ENCODE measurements at regions of chr12 and their contacts with region 1.

Region 1: DNA sequence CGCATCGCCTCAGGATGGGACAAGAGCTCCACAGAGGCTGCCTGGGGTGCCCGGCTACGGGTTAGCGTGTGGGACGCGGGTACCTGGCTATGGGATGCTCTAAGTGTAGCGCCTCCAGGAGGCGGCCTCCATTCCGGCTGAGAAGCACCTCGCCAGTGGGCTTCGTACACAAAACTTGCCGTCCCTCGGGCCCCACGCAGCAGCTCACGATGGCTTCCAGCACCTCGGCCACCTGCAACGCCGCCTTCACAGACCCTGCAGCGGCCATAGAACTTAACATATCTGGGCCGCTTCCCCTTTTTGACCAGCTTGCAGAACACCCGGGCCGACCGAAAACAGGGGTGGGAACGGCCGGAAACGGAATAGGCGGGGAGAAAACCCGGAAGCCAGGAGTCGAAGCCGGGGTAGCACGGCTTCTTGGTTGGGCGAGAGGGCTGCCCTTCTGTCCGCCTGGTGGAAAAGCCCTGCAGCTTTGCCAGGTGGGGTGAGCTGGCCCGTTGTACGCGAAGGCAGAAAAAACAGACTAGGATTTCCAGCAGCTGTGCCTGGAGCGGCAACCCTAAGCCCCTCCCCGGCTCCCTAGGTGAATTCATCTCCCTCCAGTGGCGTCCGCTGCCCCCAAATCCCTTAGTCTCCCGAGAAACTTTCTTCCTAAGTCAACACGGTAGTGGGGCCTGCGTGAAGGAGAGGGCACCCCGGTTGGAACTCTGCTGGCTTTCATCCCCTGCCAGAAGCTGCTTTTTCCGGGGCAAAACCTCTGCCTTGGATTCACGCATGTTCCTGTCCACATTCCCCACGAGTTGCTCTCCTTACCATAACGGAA is at the start of gene BBS10:
- DNase-seq: peak; percentile 83 to 91
- ATAC-seq: peak; percentile 91 to 96
- H3K4me3 ChIP-seq: peak within 1 kb of the TSS; percentile 68 to 91 (median 82)
- H3K27ac ChIP-seq: peak within 1 kb of the TSS; percentile 83 to 92 (median 88)
- H3K4me1 ChIP-seq: peaks cover 30 to 39% of the 10 kb centered on the region in 2 donors
- H3K27me3 ChIP-seq: no peaks in the 10 kb centered on the region
- CTCF ChIP-seq: peak in 4 of 5 experiments; percentile 34 to 56 (median 46)
- POLR2A ChIP-seq: peak; percentile 43 to 60
- total RNA-seq, gene BBS10: 9.0 to 17.5 (median 11.5) TPM

Region 2: DNA sequence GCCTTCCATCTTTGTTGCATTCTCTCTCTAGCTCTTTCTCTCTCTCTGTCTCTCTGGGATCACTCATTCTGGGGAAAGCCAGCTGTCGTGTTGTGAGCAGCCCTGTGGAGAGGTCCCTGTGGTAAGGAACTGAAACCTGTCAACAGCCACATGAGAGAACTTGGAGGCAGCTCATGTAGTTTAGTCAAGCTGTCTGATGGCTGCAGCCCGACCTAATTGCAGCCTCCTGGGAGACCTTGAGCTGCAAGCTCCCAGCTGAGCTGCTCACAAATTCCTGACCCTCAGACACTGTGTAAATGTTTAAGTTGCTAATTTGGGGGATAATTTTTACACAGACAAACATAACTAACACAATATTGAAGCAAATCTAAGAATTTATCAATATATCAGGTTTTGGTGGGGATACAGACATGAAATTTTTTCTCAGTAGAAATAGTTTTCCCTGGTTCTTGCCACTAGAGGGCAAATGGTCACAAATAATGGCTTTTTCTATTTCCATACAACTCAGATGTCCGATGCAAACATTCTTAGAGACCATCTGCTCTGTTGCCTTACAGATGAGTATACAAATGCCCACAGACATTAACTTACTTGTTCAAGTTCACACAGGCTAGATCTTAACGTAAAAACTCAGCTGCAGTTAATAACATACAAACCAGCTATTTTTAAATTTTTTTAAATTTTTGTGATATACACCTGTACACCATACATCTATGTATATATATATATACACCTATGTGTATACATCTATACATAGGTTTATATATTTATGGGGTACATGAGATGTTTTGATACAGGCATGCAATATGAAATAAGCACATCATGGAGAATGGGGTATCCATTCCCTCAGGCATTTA is 821.4 kb before region 1 on chr12:
- in situ Hi-C with region 1: loop called in 2 of 4 experiments (anchors 25 kb)
- intact Hi-C with region 1: loop called (anchors 5 kb)
- DNase-seq: no peak
- ATAC-seq: no peak
- H3K4me3 ChIP-seq: no peak overlapping the region
- H3K27ac ChIP-seq: no peak overlapping the region
- H3K4me1 ChIP-seq: no peaks in the 10 kb centered on the region
- H3K27me3 ChIP-seq: no peaks in the 10 kb centered on the region
- CTCF ChIP-seq: peak; percentile 25 to 61 (median 46)
- POLR2A ChIP-seq: no peak

Region 3: GRCh38 chr12:75850721-75851462 is 497.4 kb before region 1 on chr12:
- in situ Hi-C with region 1: no loop called
- intact Hi-C with region 1: no loop called
- DNase-seq: no peak
- ATAC-seq: peak in 1 of 2 donors; percentile 53
- H3K4me3 ChIP-seq: no peak overlapping the region
- H3K27ac ChIP-seq: no peak overlapping the region
- H3K4me1 ChIP-seq: peaks cover 0 to 13% of the 10 kb centered on the region in 2 donors
- H3K27me3 ChIP-seq: no peaks in the 10 kb centered on the region
- CTCF ChIP-seq: no peak
- POLR2A ChIP-seq: no peak

Region 4: GRCh38 chr12:76158518-76159321 is 189.6 kb before region 1 on chr12:
- in situ Hi-C with region 1: no loop called
- intact Hi-C with region 1: loop called (anchors 2 kb)
- DNase-seq: peak; percentile 8 to 58
- ATAC-seq: peak; percentile 89 to 97
- H3K4me3 ChIP-seq: peak overlapping the region in 1 of 4 donors; percentile 12
- H3K27ac ChIP-seq: peak overlapping the region in 1 of 4 donors; percentile 23
- H3K4me1 ChIP-seq: no peaks in the 10 kb centered on the region
- H3K27me3 ChIP-seq: no peaks in the 10 kb centered on the region
- CTCF ChIP-seq: peak; percentile 45 to 68 (median 54)
- POLR2A ChIP-seq: no peak

Region 5: DNA sequence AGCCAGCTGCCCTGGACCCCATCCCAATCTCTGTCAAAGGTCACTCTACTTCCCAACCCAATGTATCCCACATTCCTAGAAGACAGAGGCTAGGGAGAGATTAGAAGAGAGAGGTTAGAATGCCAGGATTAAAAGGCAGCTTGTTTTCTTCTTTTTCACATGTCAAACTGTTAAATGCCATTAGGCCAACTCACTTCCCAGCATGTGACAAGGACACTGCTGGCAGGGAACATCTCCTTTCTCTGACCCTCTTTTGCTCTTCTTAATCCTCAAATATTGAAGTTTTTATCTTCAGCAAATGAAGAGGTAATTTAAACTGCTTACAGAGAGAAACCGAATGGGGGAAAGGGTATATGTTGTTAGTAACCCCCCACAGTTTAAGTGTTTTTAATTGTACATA is 89.2 kb before region 1 on chr12:
- in situ Hi-C with region 1: no loop called
- intact Hi-C with region 1: no loop called
- DNase-seq: peak; percentile 29
- ATAC-seq: peak; percentile 22 to 46
- H3K4me3 ChIP-seq: no peak overlapping the region
- H3K27ac ChIP-seq: peak overlapping the region; percentile 78 to 90 (median 82)
- H3K4me1 ChIP-seq: peaks cover 23 to 46% of the 10 kb centered on the region in 2 donors
- H3K27me3 ChIP-seq: no peaks in the 10 kb centered on the region
- CTCF ChIP-seq: no peak
- POLR2A ChIP-seq: no peak

Region 6: GRCh38 chr12:76455582-76456345 is 107.5 kb after region 1 on chr12:
- in situ Hi-C with region 1: no loop called
- intact Hi-C with region 1: loop called (anchors 5 kb)
- DNase-seq: no peak
- ATAC-seq: peak; percentile 76 to 95
- H3K4me3 ChIP-seq: no peak overlapping the region
- H3K27ac ChIP-seq: peak overlapping the region in 2 of 4 donors; percentile 5 to 44
- H3K4me1 ChIP-seq: peaks cover 10 to 17% of the 10 kb centered on the region in 2 donors
- H3K27me3 ChIP-seq: no peaks in the 10 kb centered on the region
- CTCF ChIP-seq: peak in 4 of 5 experiments; percentile 25 to 68 (median 54)
- POLR2A ChIP-seq: no peak

Region 7: DNA sequence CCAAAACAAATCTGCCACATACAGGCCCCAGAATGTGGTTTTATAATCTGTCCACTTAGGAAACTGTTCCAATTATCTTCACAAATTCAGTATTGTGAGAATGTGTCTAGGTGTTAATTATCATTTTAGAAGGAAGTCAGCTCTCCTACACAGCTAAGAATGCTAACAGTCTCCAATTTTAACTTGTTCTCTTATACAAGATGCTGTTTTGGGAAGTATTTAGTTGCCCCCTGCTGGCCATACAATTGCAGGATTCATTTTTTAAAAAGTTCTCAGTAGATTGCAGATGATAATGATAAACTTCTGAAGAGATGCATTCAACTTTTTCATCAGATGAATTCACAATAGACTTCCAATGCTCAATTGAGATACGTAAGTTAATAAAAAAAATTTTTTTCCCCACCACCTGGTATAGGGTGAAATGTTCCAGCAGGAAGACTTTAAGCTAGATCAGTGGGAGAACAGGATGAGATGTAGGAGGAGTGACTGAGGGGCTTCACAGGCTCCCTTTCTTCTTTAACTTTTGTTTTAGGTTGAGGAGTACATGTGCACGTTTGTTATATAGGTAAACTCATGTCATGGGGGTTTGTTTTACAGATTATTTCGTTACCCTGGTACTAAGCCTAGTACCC is 238.6 kb after region 1 on chr12:
- in situ Hi-C with region 1: no loop called
- intact Hi-C with region 1: loop called (anchors 5 kb)
- DNase-seq: peak in 1 of 2 donors; percentile 30
- ATAC-seq: no peak
- H3K4me3 ChIP-seq: no peak overlapping the region
- H3K27ac ChIP-seq: peak overlapping the region; percentile 88 to 97 (median 90)
- H3K4me1 ChIP-seq: peaks cover 15 to 16% of the 10 kb centered on the region in 2 donors
- H3K27me3 ChIP-seq: no peaks in the 10 kb centered on the region
- CTCF ChIP-seq: peak; percentile 55 to 76 (median 64)
- POLR2A ChIP-seq: no peak

Measured in gastrocnemius medialis (tissue), 4 donors.